Mammary epithelial cell (primary cell): ENCODE measurements at regions of chr3 and their contacts with region 1.

Region 1: DNA sequence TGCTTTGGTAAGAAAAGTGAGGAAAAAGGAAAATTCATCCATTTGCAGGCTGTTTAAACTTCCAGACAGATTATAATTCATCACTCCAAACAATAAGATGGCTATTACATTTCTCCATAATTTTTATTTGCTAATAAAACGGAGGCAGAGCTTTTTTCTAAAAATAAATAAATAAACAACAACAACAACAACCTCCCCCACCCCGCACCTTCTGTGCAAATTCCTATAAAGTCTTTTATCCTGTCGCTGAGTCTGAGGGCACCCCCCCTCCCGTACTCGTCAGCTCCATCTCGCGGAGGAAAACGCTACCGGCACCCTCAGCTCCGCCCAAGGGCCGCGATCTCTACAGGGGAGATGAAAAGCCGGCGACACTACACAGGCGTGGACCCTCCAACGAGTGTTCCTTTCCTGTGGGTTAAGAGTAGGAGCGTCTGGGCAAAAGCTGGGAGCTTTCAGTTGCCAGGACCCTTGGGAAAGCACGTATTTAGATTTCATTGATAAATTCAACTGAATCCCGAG is 1.0 kb upstream of the ATP1B3 start:
- DNase-seq: peak; percentile 75
- H3K4me3 ChIP-seq: peak overlapping the region; percentile 52 to 83 (median 76)
- H3K27ac ChIP-seq: peak overlapping the region; percentile 89
- H3K4me1 ChIP-seq: peaks cover 3% of the 10 kb centered on the region
- H3K27me3 ChIP-seq: no peaks in the 10 kb centered on the region
- CTCF ChIP-seq: peak; percentile 68 to 92

Region 2: DNA sequence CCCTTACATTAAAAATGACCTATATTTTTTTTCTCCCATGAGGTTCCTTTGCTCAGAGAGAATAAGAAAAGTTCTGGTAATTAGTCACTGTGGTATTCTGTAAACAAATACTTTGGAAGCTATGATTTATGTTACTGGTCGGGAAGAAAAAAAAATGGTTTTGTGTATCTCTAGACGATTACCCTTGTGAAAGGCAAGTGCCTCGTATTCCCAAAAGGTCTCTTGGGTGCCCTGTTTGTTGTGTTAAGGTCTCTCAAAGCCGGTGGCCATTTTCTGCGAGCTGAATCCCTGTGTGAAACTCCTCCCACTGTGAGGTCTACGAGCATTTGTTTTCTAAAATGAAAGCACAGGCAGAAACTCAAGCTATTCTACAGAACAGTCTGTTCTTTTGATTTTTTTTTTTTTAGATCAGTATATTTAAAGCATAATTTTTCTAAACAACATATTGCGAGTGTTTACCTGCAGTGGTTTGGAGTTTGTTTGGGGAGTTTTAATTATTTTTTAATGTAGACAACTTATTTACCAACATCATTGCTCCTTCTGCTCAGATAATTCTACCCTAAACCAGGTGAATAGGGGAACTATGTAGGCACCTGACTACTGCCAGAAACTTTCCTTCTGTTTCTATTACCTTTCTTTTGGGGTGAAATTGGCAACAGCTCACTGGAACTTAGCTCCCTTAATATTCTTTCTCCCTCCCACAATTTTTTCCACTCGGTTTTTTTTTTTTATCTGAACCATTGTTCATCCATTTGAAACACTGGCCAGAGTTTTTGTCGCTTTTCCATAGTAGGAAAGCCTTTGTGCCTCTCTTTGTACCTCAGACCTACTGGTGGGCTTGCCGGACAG is 463.1 kb before region 1 on chr3:
- CTCF ChIA-PET with region 1: no interaction called
- dilution Hi-C with region 1: no loop called
- in situ Hi-C with region 1: no loop called
- intact Hi-C with region 1: no loop called
- DNase-seq: peak; percentile 58
- H3K4me3 ChIP-seq: peak overlapping the region; percentile 17 to 37 (median 26)
- H3K27ac ChIP-seq: peak overlapping the region; percentile 85
- H3K4me1 ChIP-seq: peaks cover 41% of the 10 kb centered on the region
- H3K27me3 ChIP-seq: no peaks in the 10 kb centered on the region
- CTCF ChIP-seq: no peak

Region 3: GRCh38 chr3:141460097-141460704 is 415.2 kb before region 1 on chr3:
- CTCF ChIA-PET with region 1: no interaction called
- dilution Hi-C with region 1: no loop called
- in situ Hi-C with region 1: no loop called
- intact Hi-C with region 1: loop called (anchors 1 kb)
- DNase-seq: peak; percentile 73
- H3K4me3 ChIP-seq: no peak overlapping the region
- H3K27ac ChIP-seq: no peak overlapping the region
- H3K4me1 ChIP-seq: no peaks in the 10 kb centered on the region
- H3K27me3 ChIP-seq: no peaks in the 10 kb centered on the region
- CTCF ChIP-seq: peak; percentile 84 to 88

Region 4: GRCh38 chr3:141663993-141664392 is 211.4 kb before region 1 on chr3:
- CTCF ChIA-PET with region 1: no interaction called
- dilution Hi-C with region 1: no loop called
- in situ Hi-C with region 1: no loop called
- intact Hi-C with region 1: no loop called
- DNase-seq: no peak
- H3K4me3 ChIP-seq: no peak overlapping the region
- H3K27ac ChIP-seq: no peak overlapping the region
- H3K4me1 ChIP-seq: peaks cover 12% of the 10 kb centered on the region
- H3K27me3 ChIP-seq: peaks cover 2% of the 10 kb centered on the region
- CTCF ChIP-seq: no peak

Region 5: GRCh38 chr3:141754032-141754431 is 121.4 kb before region 1 on chr3:
- CTCF ChIA-PET with region 1: interaction called, 12 read pairs
- dilution Hi-C with region 1: no loop called
- in situ Hi-C with region 1: no loop called
- intact Hi-C with region 1: no loop called
- DNase-seq: no peak
- H3K4me3 ChIP-seq: no peak overlapping the region
- H3K27ac ChIP-seq: no peak overlapping the region
- H3K4me1 ChIP-seq: no peaks in the 10 kb centered on the region
- H3K27me3 ChIP-seq: no peaks in the 10 kb centered on the region
- CTCF ChIP-seq: no peak

Region 6: DNA sequence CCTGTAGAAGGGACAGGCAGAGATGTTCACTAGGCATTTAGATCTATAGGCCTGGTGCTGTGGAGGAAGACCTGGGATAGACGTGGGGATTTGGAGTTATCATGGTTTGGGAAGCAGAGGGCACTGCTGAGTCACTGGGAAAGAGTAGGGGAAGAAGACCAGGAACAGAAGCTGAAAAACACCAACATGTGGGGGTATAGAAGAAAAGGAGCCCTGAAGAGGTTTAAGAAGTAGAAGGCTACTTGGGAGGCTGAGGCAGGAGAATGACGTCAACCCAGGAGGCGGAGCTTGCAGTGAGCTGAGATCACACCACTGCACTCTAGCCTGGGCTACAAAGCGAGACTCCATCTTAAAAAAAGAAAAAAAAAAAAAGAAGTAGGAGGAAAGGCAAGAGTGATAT is 93.0 kb before region 1 on chr3:
- CTCF ChIA-PET with region 1: interaction called, 8 read pairs
- dilution Hi-C with region 1: no loop called
- in situ Hi-C with region 1: no loop called
- intact Hi-C with region 1: loop called (anchors 1 kb)
- DNase-seq: peak; percentile 12
- H3K4me3 ChIP-seq: no peak overlapping the region
- H3K27ac ChIP-seq: no peak overlapping the region
- H3K4me1 ChIP-seq: no peaks in the 10 kb centered on the region
- H3K27me3 ChIP-seq: no peaks in the 10 kb centered on the region
- CTCF ChIP-seq: peak in 1 of 2 donors; percentile 56

Region 7: GRCh38 chr3:141830508-141830907 is 44.9 kb before region 1 on chr3:
- CTCF ChIA-PET with region 1: interaction called, 3 read pairs
- dilution Hi-C with region 1: no loop called
- in situ Hi-C with region 1: no loop called
- intact Hi-C with region 1: loop called (anchors 1 kb)
- DNase-seq: peak; percentile 97
- H3K4me3 ChIP-seq: no peak overlapping the region
- H3K27ac ChIP-seq: peak overlapping the region; percentile 88
- H3K4me1 ChIP-seq: peaks cover 37% of the 10 kb centered on the region
- H3K27me3 ChIP-seq: no peaks in the 10 kb centered on the region
- CTCF ChIP-seq: no peak

Region 8: GRCh38 chr3:141863491-141863890 is 11.9 kb before region 1 on chr3:
- CTCF ChIA-PET with region 1: no interaction called
- dilution Hi-C with region 1: no loop called
- in situ Hi-C with region 1: no loop called
- intact Hi-C with region 1: no loop called
- DNase-seq: no peak
- H3K4me3 ChIP-seq: no peak overlapping the region
- H3K27ac ChIP-seq: no peak overlapping the region
- H3K4me1 ChIP-seq: no peaks in the 10 kb centered on the region
- H3K27me3 ChIP-seq: no peaks in the 10 kb centered on the region
- CTCF ChIP-seq: no peak

Region 9: DNA sequence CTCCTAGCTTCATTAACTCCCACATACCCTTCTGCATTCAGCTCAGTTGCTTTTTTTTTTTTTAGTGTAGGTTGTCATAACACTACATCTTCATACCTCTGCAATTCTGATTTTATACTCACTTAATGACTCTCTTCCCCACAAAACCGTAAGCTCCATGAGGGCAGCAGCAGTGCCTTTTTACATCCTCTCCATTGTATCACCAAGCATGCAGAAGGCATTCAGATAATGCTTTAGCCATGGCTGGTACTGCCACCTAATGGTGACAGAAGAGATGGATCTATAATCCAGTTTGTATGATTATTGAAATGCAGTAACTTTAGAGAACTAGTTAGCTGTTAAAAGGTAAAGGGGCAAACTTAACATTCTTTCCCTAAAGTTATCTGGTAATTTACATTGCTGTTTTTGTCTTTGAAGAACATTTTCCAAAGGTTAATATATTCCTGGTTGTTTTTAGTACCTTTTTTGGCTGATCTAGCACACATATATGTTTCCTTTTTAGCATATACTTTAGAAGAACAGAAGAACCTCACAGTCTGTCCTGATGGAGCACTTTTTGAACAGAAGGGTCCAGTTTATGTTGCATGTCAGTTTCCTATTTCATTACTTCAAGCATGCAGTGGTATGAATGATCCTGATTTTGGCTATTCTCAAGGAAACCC is 37.8 kb after region 1 on chr3:
- CTCF ChIA-PET with region 1: interaction called, 3 read pairs
- dilution Hi-C with region 1: no loop called
- in situ Hi-C with region 1: no loop called
- intact Hi-C with region 1: loop called (anchors 2 kb)
- DNase-seq: peak; percentile 42
- H3K4me3 ChIP-seq: no peak overlapping the region
- H3K27ac ChIP-seq: no peak overlapping the region
- H3K4me1 ChIP-seq: no peaks in the 10 kb centered on the region
- H3K27me3 ChIP-seq: no peaks in the 10 kb centered on the region
- CTCF ChIP-seq: peak; percentile 68 to 69

Region 10: GRCh38 chr3:141998669-141999290 is 123.3 kb after region 1 on chr3:
- CTCF ChIA-PET with region 1: no interaction called
- dilution Hi-C with region 1: no loop called
- in situ Hi-C with region 1: no loop called
- intact Hi-C with region 1: loop called (anchors 2 kb)
- DNase-seq: peak; percentile 15
- H3K4me3 ChIP-seq: no peak overlapping the region
- H3K27ac ChIP-seq: no peak overlapping the region
- H3K4me1 ChIP-seq: no peaks in the 10 kb centered on the region
- H3K27me3 ChIP-seq: no peaks in the 10 kb centered on the region
- CTCF ChIP-seq: peak; percentile 42 to 50

Region 11: GRCh38 chr3:142013326-142013980 is 138.0 kb after region 1 on chr3:
- CTCF ChIA-PET with region 1: no interaction called
- dilution Hi-C with region 1: no loop called
- in situ Hi-C with region 1: no loop called
- intact Hi-C with region 1: no loop called
- DNase-seq: no peak
- H3K4me3 ChIP-seq: no peak overlapping the region
- H3K27ac ChIP-seq: no peak overlapping the region
- H3K4me1 ChIP-seq: no peaks in the 10 kb centered on the region
- H3K27me3 ChIP-seq: no peaks in the 10 kb centered on the region
- CTCF ChIP-seq: no peak